ENCODE measurements at regions of chr3 and their contacts with region 1.

Region 1: GRCh38 chr3:107927361-107928083 is 163.3 kb downstream of the CD47 start:
- DNase-seq: peak; percentile 37 to 83 (median 56)
- ATAC-seq: peak; percentile 90
- H3K4me3 ChIP-seq: peak overlapping the region; percentile 68
- H3K4me3 Mint-ChIP-seq: peak overlapping the region; percentile 91
- H3K27ac ChIP-seq: no peak overlapping the region
- H3K27ac Mint-ChIP-seq: no peak overlapping the region
- H3K4me1 ChIP-seq: peaks cover 16% of the 10 kb centered on the region
- H3K4me1 Mint-ChIP-seq: peaks cover 14% of the 10 kb centered on the region
- H3K27me3 ChIP-seq: peaks cover 0 to 6% of the 10 kb centered on the region in 2 experiments
- H3K27me3 Mint-ChIP-seq: peaks cover 4% of the 10 kb centered on the region
- CTCF ChIP-seq: peak; percentile 94

Region 2: DNA sequence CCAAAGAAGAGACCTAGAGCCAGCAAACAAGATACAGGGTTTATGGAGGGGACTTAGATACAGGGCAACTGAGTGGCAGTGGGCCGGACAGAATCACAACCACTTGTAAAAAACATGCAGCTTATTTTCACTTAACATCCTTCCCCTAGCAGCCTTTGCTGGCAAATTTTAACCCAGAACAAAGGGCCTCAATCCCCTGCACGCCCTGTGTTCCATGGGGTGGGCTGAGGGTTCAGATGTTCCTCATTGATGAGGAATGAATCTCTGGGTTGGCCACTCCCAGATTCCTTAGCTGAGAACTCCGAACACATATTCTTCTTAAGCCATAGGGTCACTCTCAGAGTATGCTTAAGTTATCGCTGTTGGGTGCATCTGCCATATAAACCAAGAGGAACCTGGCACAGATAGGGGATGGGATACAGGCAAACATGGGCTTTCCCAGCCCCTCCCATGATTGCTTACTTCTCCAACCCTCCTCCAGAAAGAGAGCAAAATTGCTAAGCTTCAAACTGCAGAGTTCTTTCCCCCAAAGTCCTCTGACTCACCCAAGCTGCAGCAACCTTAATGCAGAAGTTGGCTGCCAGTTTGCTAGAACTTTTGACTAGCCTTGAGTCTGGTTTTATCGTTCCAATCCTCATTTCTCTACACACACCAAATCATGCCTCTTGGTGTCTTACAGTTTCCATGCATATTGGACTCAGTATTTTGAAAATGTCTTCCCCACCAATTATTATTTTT is 16.4 kb after region 1 on chr3:
- CTCF ChIA-PET with region 1: interaction called, 10 read pairs
- POLR2A ChIA-PET with region 1: no interaction called
- intact Hi-C with region 1: no loop called
- DNase-seq: peak in 2 of 14 experiments; percentile 15 to 17
- ATAC-seq: no peak
- H3K4me3 ChIP-seq: no peak overlapping the region
- H3K4me3 Mint-ChIP-seq: no peak overlapping the region
- H3K27ac ChIP-seq: no peak overlapping the region
- H3K27ac Mint-ChIP-seq: no peak overlapping the region
- H3K4me1 ChIP-seq: peaks cover 3% of the 10 kb centered on the region
- H3K4me1 Mint-ChIP-seq: peaks cover 10% of the 10 kb centered on the region
- H3K27me3 ChIP-seq: no peaks in the 10 kb centered on the region
- H3K27me3 Mint-ChIP-seq: no peaks in the 10 kb centered on the region
- CTCF ChIP-seq: no peak

Region 3: DNA sequence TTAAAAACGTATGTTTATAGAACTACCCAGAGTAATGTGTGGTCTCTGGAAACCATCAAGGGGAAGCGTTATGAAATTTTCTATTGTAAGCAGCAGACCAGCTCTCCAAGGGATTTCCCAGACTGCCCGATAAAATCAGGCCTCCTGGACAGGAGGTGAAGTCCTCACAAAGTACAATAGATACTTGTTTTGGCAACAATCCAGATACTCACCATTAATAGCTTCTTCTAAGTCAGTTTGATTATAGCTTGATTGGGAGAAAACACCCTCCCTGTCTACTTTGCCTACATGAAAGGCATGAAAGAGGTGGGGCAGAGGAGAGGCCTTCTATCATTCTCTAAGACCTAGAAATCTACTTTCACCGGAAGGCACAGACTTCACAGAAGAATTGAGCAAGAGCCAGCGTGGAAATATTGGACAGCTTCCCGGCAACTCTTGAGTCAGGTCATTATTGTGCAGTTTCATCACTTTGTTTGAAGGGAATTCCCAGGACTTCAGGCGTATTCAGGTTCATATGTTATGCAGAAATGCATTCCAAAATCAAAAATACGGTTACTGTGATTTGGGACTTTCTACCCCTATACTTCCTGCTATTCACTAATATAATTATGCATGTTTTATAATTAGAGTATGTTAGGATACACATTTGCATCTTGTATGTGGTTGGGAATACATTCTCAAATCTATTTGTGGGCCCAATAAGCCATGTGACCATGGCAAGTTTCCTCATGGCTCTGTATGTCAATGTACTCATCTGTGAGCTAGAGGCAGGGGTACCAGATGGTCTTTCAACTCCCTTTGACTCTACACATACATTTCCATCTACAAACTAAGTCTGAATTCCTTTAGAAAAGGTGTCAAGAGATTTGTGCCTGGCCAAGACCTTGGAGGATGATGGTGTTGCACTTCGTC is 59.8 kb after region 1 on chr3:
- CTCF ChIA-PET with region 1: no interaction called
- POLR2A ChIA-PET with region 1: no interaction called
- intact Hi-C with region 1: no loop called
- DNase-seq: peak in 2 of 14 experiments; percentile 55 to 64
- ATAC-seq: no peak
- H3K4me3 ChIP-seq: no peak overlapping the region
- H3K4me3 Mint-ChIP-seq: no peak overlapping the region
- H3K27ac ChIP-seq: no peak overlapping the region
- H3K27ac Mint-ChIP-seq: no peak overlapping the region
- H3K4me1 ChIP-seq: peaks cover 22% of the 10 kb centered on the region
- H3K4me1 Mint-ChIP-seq: peaks cover 38% of the 10 kb centered on the region
- H3K27me3 ChIP-seq: no peaks in the 10 kb centered on the region
- H3K27me3 Mint-ChIP-seq: no peaks in the 10 kb centered on the region
- CTCF ChIP-seq: no peak

Region 4: GRCh38 chr3:108477511-108478147 is 550.1 kb after region 1 on chr3:
- CTCF ChIA-PET with region 1: no interaction called
- POLR2A ChIA-PET with region 1: no interaction called
- intact Hi-C with region 1: loop called in 1 of 2 experiments (anchors 5 kb)
- DNase-seq: peak; percentile 23 to 78 (median 44)
- ATAC-seq: peak; percentile 89
- H3K4me3 ChIP-seq: no peak overlapping the region
- H3K4me3 Mint-ChIP-seq: no peak overlapping the region
- H3K27ac ChIP-seq: no peak overlapping the region
- H3K27ac Mint-ChIP-seq: no peak overlapping the region
- H3K4me1 ChIP-seq: no peaks in the 10 kb centered on the region
- H3K4me1 Mint-ChIP-seq: peaks cover 4% of the 10 kb centered on the region
- H3K27me3 ChIP-seq: no peaks in the 10 kb centered on the region
- H3K27me3 Mint-ChIP-seq: no peaks in the 10 kb centered on the region
- CTCF ChIP-seq: peak; percentile 72